Body of pancreas (tissue), 4 donors: ENCODE measurements at regions of chr9 and their contacts with region 1.

Region 1: DNA sequence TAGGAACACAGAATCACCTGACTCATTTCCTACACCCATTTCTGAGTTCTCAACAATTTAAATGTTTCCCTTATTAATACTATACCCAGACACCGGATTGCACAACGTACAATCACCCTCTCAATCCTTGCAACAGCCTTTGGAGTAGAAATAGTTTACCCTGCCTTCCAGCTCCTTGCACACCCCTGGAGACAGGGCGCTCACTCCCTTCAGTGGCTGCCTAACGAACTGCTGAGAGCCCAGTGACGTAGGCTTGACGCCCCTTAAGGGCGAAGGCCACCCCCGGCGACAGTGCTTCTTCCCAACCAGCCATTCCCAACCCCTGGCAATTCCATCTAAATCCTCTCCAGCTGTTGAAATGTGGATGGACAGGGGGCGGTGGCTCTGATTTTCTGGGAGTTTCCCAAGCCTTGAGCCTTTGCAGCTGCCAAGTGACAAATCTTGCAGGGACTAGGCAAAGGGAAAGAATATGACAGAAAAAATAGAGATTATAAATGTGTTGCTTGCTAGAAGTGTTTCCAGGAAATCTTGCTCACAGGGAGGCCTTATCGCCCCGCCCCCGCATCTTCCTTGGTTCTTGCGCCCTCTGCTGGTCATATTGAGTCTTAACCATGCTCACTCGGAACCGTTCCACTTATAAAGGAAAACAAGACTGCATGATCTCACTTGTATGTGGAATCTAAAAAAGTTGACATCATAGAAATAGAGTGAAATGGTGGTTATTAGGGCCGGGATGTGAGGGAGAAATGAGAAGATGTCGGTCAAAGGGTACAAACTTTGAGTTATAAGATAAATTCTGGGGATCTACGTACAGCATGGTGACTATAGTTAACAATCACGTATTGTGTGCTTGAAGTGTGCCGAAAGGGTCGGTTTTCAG is 7.6 kb upstream of the BARX1 start:
- DNase-seq: peak; percentile 86 to 88 (median 87)
- ATAC-seq: peak; percentile 84
- H3K4me3 ChIP-seq: no peak overlapping the region
- H3K27ac ChIP-seq: no peak overlapping the region
- H3K4me1 ChIP-seq: peaks cover 29% of the 10 kb centered on the region
- H3K27me3 ChIP-seq: peaks cover 0 to 36% of the 10 kb centered on the region in 2 donors
- CTCF ChIP-seq: peak; percentile 70 to 93 (median 89)
- POLR2A ChIP-seq: no peak

Region 2: GRCh38 chr9:93682232-93682968 is 280.4 kb before region 1 on chr9:
- intact Hi-C with region 1: loop called (anchors 5 kb)
- DNase-seq: peak; percentile 57 to 74 (median 66)
- ATAC-seq: peak; percentile 63
- H3K4me3 ChIP-seq: no peak overlapping the region
- H3K27ac ChIP-seq: no peak overlapping the region
- H3K4me1 ChIP-seq: peaks cover 6% of the 10 kb centered on the region
- H3K27me3 ChIP-seq: no peaks in the 10 kb centered on the region
- CTCF ChIP-seq: peak; percentile 66 to 87 (median 77)
- POLR2A ChIP-seq: no peak

Region 3: GRCh38 chr9:93827545-93828330 is 135.1 kb before region 1 on chr9:
- intact Hi-C with region 1: loop called (anchors 10 kb)
- DNase-seq: peak; percentile 52 to 72 (median 66)
- ATAC-seq: peak; percentile 92
- H3K4me3 ChIP-seq: no peak overlapping the region
- H3K27ac ChIP-seq: no peak overlapping the region
- H3K4me1 ChIP-seq: peaks cover 3% of the 10 kb centered on the region
- H3K27me3 ChIP-seq: no peaks in the 10 kb centered on the region
- CTCF ChIP-seq: peak; percentile 73 to 93 (median 83)
- POLR2A ChIP-seq: no peak